ENCODE measurements at regions of chr17 and their contacts with region 1.

Region 1: GRCh38 chr17:35088881-35089585 is 25.5 kb upstream of the RFFL start:
- DNase-seq: peak; percentile 92
- ATAC-seq: peak; percentile 81
- H3K4me3 Mint-ChIP-seq: peak overlapping the region; percentile 91
- H3K27ac Mint-ChIP-seq: peak overlapping the region; percentile 92
- H3K4me1 Mint-ChIP-seq: peaks cover 33% of the 10 kb centered on the region
- H3K27me3 Mint-ChIP-seq: no peaks in the 10 kb centered on the region
- CTCF ChIP-seq: peak; percentile 40

Region 2: GRCh38 chr17:34961093-34961911 is 127.7 kb before region 1 on chr17 and contains the starts of genes CCT6B and ZNF830:
- CTCF ChIA-PET with region 1: interaction called, 3 read pairs
- POLR2A ChIA-PET with region 1: interaction called, 11 read pairs
- intact Hi-C with region 1: loop called (anchors 1 kb)
- DNase-seq: peak; percentile 81
- ATAC-seq: peak; percentile 94
- H3K4me3 Mint-ChIP-seq: peak within 1 kb of the TSS; percentile 100
- H3K27ac Mint-ChIP-seq: peak within 1 kb of the TSS; percentile 99
- H3K4me1 Mint-ChIP-seq: peaks cover 24% of the 10 kb centered on the region
- H3K27me3 Mint-ChIP-seq: peaks cover 8% of the 10 kb centered on the region
- CTCF ChIP-seq: no peak
- total RNA-seq, gene CCT6B: 2.1 and 2.4 TPM in 2 replicates
- total RNA-seq, gene ZNF830: 29.9 and 31.6 TPM in 2 replicates

Region 3: GRCh38 chr17:34998205-34998604 is 90.8 kb before region 1 on chr17:
- CTCF ChIA-PET with region 1: interaction called, 16 read pairs
- POLR2A ChIA-PET with region 1: interaction called, 3 read pairs
- intact Hi-C with region 1: loop called (anchors 1 kb)
- DNase-seq: peak; percentile 65
- ATAC-seq: peak; percentile 100
- H3K4me3 Mint-ChIP-seq: no peak overlapping the region
- H3K27ac Mint-ChIP-seq: peak overlapping the region; percentile 66
- H3K4me1 Mint-ChIP-seq: peaks cover 4% of the 10 kb centered on the region
- H3K27me3 Mint-ChIP-seq: no peaks in the 10 kb centered on the region
- CTCF ChIP-seq: no peak

Region 4: DNA sequence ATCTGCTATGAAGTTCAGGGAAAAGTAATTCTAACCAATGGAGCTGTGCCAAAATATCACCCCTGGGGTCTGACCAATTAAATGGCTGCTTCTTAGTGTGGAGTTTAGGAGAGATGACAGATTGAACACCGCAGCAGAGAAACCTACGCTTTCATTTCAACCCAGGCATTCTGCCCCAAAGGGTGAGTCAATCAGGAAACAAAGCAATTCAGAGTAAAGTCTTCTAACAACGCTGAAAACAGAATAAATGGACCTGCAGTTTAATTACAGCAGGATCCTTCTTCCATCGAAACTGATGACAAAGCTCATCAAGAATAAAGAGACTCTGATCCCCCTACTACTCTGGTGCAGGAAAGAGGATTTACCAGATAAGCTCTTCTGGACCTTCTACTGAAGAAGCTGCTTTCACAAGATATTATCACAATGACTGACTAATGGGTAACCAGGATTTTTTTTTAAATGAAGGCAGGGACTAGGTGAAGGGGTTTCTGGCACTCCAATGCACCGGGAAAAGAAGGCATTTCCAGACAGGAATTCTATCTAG is 42.2 kb before region 1 on chr17:
- CTCF ChIA-PET with region 1: interaction called, 6 read pairs
- POLR2A ChIA-PET with region 1: no interaction called
- intact Hi-C with region 1: loop called (anchors 1 kb)
- DNase-seq: no peak
- ATAC-seq: peak; percentile 78
- H3K4me3 Mint-ChIP-seq: peak overlapping the region; percentile 58
- H3K27ac Mint-ChIP-seq: peak overlapping the region; percentile 78
- H3K4me1 Mint-ChIP-seq: peaks cover 63% of the 10 kb centered on the region
- H3K27me3 Mint-ChIP-seq: no peaks in the 10 kb centered on the region
- CTCF ChIP-seq: no peak

Region 5: GRCh38 chr17:35119368-35120165 is 30.5 kb after region 1 on chr17 and contains the start of gene RAD51D:
- CTCF ChIA-PET with region 1: interaction called, 25 read pairs
- POLR2A ChIA-PET with region 1: interaction called, 19 read pairs
- intact Hi-C with region 1: loop called (anchors 1 kb)
- DNase-seq: peak; percentile 88
- ATAC-seq: peak; percentile 92
- H3K4me3 Mint-ChIP-seq: peak within 1 kb of the TSS; percentile 91
- H3K27ac Mint-ChIP-seq: peak within 1 kb of the TSS; percentile 88
- H3K4me1 Mint-ChIP-seq: peaks cover 31% of the 10 kb centered on the region
- H3K27me3 Mint-ChIP-seq: peaks cover 2% of the 10 kb centered on the region
- CTCF ChIP-seq: peak; percentile 59
- total RNA-seq, gene RAD51D: 17.0 and 22.9 TPM in 2 replicates

Measured in activated B cell treated with CpG ODN at 0.5 μM for 24 hours (primary cell).